PC-3 (cell line): ENCODE measurements at regions of chr2 and their contacts with region 1.

Region 1: DNA sequence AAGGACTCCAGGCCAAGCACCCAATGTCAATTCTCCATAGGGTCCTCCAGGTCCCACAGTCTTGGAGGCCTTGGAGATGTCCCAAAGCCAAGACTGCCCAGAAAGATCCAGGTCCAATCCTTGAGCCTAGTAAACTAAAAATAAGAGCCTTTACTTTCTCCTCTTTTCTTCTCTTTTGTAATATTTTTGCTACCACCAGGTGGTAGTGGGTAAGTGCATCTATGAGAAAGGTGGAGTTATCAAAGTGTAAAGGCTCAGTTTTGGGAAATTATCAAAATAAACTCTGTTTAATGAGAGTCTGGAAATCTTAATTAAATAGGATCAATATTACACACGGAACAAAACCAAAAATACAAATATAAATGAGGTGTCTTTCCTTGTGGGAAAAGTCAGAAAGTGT is 276.4 kb downstream of the ALK start:
- DNase-seq: peak; percentile 27
- ATAC-seq: no peak
- H3K4me3 ChIP-seq: no peak overlapping the region
- H3K27ac ChIP-seq: no peak overlapping the region
- H3K4me1 ChIP-seq: peaks cover 2% of the 10 kb centered on the region; the same call in 1 of the 2 replicates
- H3K27me3 ChIP-seq: no peaks in the 10 kb centered on the region
- CTCF ChIP-seq: peak; percentile 51; the same call in 1 of the 2 replicates

Region 2: DNA sequence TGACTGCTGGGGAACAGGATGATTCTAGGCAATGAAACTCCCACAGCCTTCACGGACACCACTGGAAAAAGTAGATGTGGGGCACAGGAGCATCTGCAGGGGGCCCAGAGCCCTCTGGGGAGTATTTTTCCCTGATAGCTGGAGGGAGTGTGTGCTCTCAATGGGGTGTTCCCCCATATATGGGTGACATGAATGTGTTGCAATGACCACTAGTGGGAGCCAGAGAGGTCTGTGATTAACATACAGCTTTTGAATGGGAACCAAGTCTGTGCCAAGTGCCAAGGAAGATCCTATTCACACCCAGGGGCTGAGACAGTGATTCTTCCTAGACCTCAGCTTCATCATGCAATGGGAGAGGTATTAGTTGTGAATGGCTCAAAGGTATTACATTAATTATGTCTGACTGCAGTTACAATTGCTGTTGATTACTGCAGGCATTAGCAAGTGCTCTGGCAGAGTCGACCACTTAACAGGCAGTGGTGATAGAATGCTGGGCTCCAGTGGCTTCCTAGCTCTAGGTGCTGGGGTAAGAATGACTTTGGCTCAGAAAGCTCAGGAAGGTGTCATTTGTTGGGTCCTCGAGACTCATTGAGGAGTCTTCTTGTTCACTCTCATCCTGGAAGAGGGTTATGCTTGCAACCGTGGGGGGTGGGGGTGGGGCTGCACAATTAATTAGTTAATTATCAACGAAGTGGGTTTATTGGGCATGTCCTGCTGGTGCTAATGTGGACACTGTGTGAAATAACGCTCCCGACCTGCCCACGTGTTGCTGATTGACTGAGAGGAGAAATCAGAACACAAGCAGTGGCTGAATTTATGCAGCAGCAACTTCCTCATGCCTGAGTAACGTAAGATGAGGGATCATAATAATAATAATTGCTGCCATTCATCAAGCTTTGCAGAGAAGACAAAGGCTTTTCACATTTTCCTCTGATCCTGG is 335.6 kb before region 1 on chr2:
- CTCF ChIA-PET with region 1: no interaction called
- POLR2A ChIA-PET with region 1: no interaction called
- intact Hi-C with region 1: loop called (anchors 10 kb)
- DNase-seq: peak; percentile 76
- ATAC-seq: peak; percentile 82
- H3K4me3 ChIP-seq: no peak overlapping the region
- H3K27ac ChIP-seq: no peak overlapping the region
- H3K4me1 ChIP-seq: no peaks in the 10 kb centered on the region; the same call in 1 of the 2 replicates
- H3K27me3 ChIP-seq: no peaks in the 10 kb centered on the region
- CTCF ChIP-seq: peak; percentile 87